Activated CD4-positive, alpha-beta T cell treated with anti-CD3 and anti-CD28 coated beads for 36 hours (primary cell): ENCODE measurements at regions of chr11 and their contacts with region 1.

Region 1: GRCh38 chr11:10878408-10879214 is 20.8 kb upstream of the ZBED5 start:
- DNase-seq: no peak
- ATAC-seq: peak; percentile 83
- H3K4me3 Mint-ChIP-seq: no peak overlapping the region
- H3K27ac Mint-ChIP-seq: peak overlapping the region; percentile 52
- H3K4me1 Mint-ChIP-seq: peaks cover 13% of the 10 kb centered on the region
- H3K27me3 Mint-ChIP-seq: no peaks in the 10 kb centered on the region

Region 2: GRCh38 chr11:10893714-10894151 is 15.1 kb after region 1 on chr11:
- CTCF ChIA-PET with region 1: interaction called, 17 read pairs
- POLR2A ChIA-PET with region 1: no interaction called
- intact Hi-C with region 1: no loop called
- DNase-seq: no peak
- ATAC-seq: no peak
- H3K4me3 Mint-ChIP-seq: no peak overlapping the region
- H3K27ac Mint-ChIP-seq: no peak overlapping the region
- H3K4me1 Mint-ChIP-seq: peaks cover 4% of the 10 kb centered on the region
- H3K27me3 Mint-ChIP-seq: no peaks in the 10 kb centered on the region

Region 3: GRCh38 chr11:10899121-10899830 is 20.7 kb after region 1 on chr11:
- CTCF ChIA-PET with region 1: interaction called, 17 read pairs
- POLR2A ChIA-PET with region 1: no interaction called
- intact Hi-C with region 1: no loop called
- DNase-seq: no peak
- ATAC-seq: peak; percentile 51
- H3K4me3 Mint-ChIP-seq: no peak overlapping the region
- H3K27ac Mint-ChIP-seq: peak overlapping the region; percentile 91
- H3K4me1 Mint-ChIP-seq: peaks cover 29% of the 10 kb centered on the region
- H3K27me3 Mint-ChIP-seq: peaks cover 5% of the 10 kb centered on the region